HAP-1 (cell line): ENCODE measurements at regions of chr10 and their contacts with region 1.

Region 1: DNA sequence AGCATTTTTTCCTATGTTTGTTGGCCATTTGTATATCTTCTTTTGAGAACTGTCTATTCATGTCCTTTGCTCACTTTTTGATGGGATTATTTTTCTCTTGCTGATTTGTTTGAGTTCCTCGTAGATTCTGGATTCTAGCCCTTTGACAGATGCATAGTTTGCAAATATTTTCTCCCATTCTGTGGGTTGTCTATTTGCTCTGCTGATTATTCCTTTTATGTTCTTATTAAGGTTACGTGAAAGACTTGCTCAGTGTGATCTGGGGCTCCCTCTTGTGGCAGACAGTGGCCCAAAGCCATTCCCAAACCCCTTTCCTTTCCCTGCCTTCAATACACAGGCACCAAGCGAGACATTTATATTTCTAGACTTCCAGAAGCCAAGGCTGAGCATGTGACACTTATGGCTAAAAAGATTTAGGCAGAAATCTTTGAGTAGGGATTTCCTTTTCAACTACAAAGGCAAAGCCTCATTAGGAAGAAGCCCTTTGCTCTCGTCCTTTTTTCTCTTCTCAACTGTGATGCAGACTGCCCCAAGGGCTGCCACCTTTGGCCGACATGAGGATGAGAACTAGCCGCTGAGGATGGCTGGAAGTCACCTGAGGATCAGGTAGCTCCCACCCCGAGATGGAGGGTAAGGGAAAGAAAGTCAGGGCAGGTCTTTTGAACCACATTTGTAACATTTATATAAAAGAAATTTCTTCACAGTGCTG is 23.6 kb downstream of the ST8SIA6 start:
- DNase-seq: peak; percentile 68 to 85
- H3K4me3 ChIP-seq: no peak overlapping the region
- H3K4me1 ChIP-seq: no peaks in the 10 kb centered on the region
- H3K27me3 ChIP-seq: peaks cover 3% of the 10 kb centered on the region; the same call in 1 of the 2 replicates

Region 2: DNA sequence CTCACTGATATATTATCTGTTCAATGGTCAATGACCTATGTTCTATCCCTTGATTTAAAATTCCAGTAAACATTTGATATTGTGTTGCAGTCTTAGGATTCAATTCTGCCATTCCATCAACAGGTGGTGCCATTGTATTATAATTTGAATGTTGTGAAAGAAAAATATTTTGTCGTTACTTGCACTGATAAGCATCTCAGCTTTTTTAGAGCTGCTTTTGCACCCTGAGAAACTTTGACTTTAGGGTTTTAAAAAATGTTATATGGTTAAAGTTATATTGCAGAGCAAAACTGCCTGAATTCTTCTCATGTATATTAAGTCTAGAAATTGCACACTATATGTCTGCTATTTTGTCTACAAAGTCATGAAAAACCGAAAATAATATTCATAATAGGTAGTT is 1551.7 kb before region 1 on chr10:
- in situ Hi-C with region 1: loop called (anchors 25 kb)
- DNase-seq: peak; percentile 13 to 47
- H3K4me3 ChIP-seq: no peak overlapping the region
- H3K4me1 ChIP-seq: no peaks in the 10 kb centered on the region
- H3K27me3 ChIP-seq: peaks cover 14% of the 10 kb centered on the region

Region 3: DNA sequence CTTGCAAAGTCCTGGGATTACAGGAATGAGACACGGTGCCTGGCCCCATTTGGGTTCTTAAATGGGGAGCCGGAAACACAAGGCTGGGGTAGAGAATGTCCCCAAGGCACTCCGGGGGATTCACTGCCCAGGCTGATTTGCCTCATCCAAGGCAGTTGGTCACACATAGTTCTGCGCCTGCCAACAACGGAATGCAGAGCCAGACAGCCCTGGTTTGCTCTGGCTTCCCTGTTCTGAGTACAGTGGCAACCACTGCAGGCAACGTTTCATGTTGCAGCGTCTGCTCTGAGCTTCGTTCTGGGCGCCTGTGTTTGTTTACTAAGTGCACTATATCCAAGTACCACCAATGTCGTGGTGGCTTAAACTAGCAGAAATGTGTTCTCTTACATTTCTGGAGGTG is 847.4 kb before region 1 on chr10:
- in situ Hi-C with region 1: no loop called
- DNase-seq: no peak
- H3K4me3 ChIP-seq: no peak overlapping the region
- H3K4me1 ChIP-seq: no peaks in the 10 kb centered on the region
- H3K27me3 ChIP-seq: no peaks in the 10 kb centered on the region

Region 4: DNA sequence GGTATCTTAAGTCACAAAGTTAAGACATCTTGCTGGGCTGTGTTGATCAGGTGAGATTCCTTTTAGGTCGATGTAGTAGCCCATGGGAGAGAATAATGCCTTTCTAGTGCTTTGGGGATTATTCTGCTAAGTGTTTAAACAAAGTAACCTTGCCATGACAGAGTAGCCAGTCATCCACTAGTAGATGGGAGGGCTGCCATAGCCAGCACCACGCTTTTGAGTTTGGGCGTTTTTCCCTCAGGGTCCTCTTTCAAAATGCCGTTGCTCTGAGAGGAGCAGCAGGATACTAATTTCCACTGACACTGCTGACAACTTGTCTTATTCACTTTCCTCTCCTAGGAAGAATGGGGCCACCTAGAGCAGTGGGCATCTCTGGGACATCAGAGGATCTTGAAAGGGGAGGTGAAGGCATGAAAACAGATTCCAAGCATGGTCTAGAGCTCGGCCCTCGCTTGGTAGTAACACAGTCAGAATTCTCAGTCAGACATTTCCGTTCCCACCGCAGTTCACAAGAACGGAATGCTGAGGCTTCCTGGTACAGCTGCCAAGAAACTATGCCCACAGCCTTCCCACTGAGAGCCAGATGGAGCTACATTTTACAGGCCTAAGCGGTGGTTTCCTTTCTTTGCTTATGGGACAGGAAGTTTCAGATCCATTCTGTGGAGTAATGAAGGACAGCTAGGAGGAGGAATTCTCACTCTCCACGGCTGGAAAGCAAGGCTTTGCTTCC is 598.3 kb before region 1 on chr10:
- in situ Hi-C with region 1: loop called (anchors 10 kb)
- DNase-seq: no peak
- H3K4me3 ChIP-seq: no peak overlapping the region
- H3K4me1 ChIP-seq: no peaks in the 10 kb centered on the region
- H3K27me3 ChIP-seq: no peaks in the 10 kb centered on the region